CD4-positive, alpha-beta memory T cell (primary cell): ENCODE measurements at regions of chrX and their contacts with region 1.

Region 1: DNA sequence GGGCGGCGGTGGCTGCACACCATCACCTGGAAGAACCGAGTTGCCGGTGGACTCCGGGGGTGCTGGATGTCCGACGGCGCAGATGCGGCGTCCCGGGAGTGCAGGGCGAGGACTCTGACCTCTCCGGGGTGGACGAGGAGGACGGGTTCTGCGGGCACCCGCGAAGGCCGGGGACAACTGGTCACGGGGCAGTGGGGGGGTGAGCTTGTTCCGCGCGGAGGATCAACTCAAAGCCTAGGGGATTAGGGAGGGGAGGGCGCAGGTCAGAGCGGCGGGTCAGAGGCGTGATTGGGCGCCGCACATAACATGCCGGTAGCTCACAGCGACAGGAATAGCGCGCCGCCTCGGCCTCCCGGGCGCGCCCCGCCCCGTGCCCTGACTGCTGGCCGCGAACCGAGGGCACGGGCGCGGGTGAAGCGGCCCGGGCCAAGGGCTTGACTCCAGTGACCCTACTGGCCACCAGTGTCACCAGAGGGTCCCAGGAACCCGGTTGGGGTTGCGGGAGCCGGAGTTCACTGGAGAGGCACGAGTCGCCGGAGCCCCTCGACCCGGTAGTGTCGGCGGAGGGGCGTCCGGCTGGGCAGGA is at the start of gene KLHL34:
- DNase-seq: peak in 2 of 5 donors; percentile 5 to 11
- H3K4me3 ChIP-seq: peak within 1 kb of the TSS in 1 of 2 donors; percentile 43
- H3K4me3 Mint-ChIP-seq: peak within 1 kb of the TSS; percentile 35 to 83 (median 68)
- H3K27ac ChIP-seq: no peak within 1 kb of the TSS
- H3K27ac Mint-ChIP-seq: peak within 1 kb of the TSS in 5 of 7 donors; percentile 31 to 61 (median 48)
- H3K4me1 ChIP-seq: no peaks in the 10 kb centered on the region
- H3K4me1 Mint-ChIP-seq: peaks cover 0 to 2% (median 0%) of the 10 kb centered on the region in 4 donors
- H3K27me3 ChIP-seq: no peaks in the 10 kb centered on the region
- H3K27me3 Mint-ChIP-seq: peaks cover 0 to 4% of the 10 kb centered on the region in 2 donors
- total RNA-seq, gene KLHL34: 2.5 to 2.6 TPM

Region 2: GRCh38 chrX:21374163-21374993 is 283.9 kb before region 1 on chrX and contains the start of gene CNKSR2:
- CTCF ChIA-PET with region 1: no interaction called
- POLR2A ChIA-PET with region 1: interaction called, 3 read pairs
- intact Hi-C with region 1: loop called (anchors 10 kb)
- DNase-seq: peak; percentile 60 to 68 (median 65)
- H3K4me3 ChIP-seq: peak within 1 kb of the TSS in 1 of 2 donors; percentile 52
- H3K4me3 Mint-ChIP-seq: peak within 1 kb of the TSS; percentile 86 to 92 (median 87)
- H3K27ac ChIP-seq: peak within 1 kb of the TSS; percentile 21
- H3K27ac Mint-ChIP-seq: peak within 1 kb of the TSS in 6 of 7 donors; percentile 9 to 81 (median 36)
- H3K4me1 ChIP-seq: peaks cover 19% of the 10 kb centered on the region
- H3K4me1 Mint-ChIP-seq: peaks cover 2 to 22% (median 12%) of the 10 kb centered on the region in 4 donors
- H3K27me3 ChIP-seq: no peaks in the 10 kb centered on the region
- H3K27me3 Mint-ChIP-seq: peaks cover 0 to 1% of the 10 kb centered on the region in 2 donors
- total RNA-seq, gene CNKSR2: 8.6 to 9.8 TPM